ENCODE measurements at regions of chr20 and their contacts with region 1.

Region 1: DNA sequence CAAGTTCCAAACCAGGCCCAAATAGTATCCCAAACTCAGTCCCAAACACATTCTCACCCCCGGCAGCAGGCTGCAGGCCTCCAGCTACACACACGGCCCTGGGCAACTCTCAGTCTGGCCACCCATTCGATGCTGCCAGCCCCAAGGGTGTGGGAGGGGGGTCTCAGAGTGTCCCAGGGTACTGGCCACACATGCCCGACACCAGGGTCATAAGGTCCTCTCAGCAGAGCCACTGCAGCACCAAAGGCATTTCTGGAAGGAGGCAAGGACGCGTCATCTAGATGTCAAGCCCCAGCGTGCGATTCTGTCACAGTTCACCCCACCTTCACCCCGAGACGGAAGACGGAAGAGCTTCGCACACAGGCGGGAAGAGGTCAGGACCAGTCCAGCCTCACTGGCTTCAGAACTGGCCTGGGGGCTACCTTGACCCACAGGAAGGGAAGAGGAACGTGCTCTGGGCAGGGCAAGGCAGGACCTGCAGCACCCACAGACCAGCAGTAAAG is 9.5 kb downstream of the MYL9 start:
- DNase-seq: no peak
- ATAC-seq: no peak
- H3K4me3 Mint-ChIP-seq: no peak overlapping the region
- H3K27ac Mint-ChIP-seq: no peak overlapping the region
- H3K4me1 Mint-ChIP-seq: no peaks in the 10 kb centered on the region
- H3K27me3 Mint-ChIP-seq: no peaks in the 10 kb centered on the region

Region 2: GRCh38 chr20:36591854-36592641 is 41.2 kb after region 1 on chr20:
- CTCF ChIA-PET with region 1: no interaction called
- POLR2A ChIA-PET with region 1: interaction called, 3 read pairs
- intact Hi-C with region 1: loop called in 1 of 2 experiments (anchors 2 kb)
- DNase-seq: peak; percentile 76
- ATAC-seq: peak; percentile 50
- H3K4me3 Mint-ChIP-seq: peak overlapping the region; percentile 4
- H3K27ac Mint-ChIP-seq: peak overlapping the region; percentile 69
- H3K4me1 Mint-ChIP-seq: peaks cover 57% of the 10 kb centered on the region
- H3K27me3 Mint-ChIP-seq: no peaks in the 10 kb centered on the region

Region 3: GRCh38 chr20:36605399-36606157 is 54.7 kb after region 1 on chr20 and contains the start of gene RAB5IF:
- CTCF ChIA-PET with region 1: no interaction called
- POLR2A ChIA-PET with region 1: no interaction called
- intact Hi-C with region 1: loop called (anchors 1 kb)
- DNase-seq: peak; percentile 100
- ATAC-seq: peak; percentile 91
- H3K4me3 Mint-ChIP-seq: peak within 1 kb of the TSS; percentile 100
- H3K27ac Mint-ChIP-seq: peak within 1 kb of the TSS; percentile 96
- H3K4me1 Mint-ChIP-seq: peaks cover 17% of the 10 kb centered on the region
- H3K27me3 Mint-ChIP-seq: no peaks in the 10 kb centered on the region
- total RNA-seq, gene RAB5IF: 71.7 to 90.2 TPM

Region 4: GRCh38 chr20:36629719-36630681 is 79.2 kb after region 1 on chr20:
- CTCF ChIA-PET with region 1: no interaction called
- POLR2A ChIA-PET with region 1: no interaction called
- intact Hi-C with region 1: no loop called
- DNase-seq: peak; percentile 73
- ATAC-seq: peak; percentile 93
- H3K4me3 Mint-ChIP-seq: peak overlapping the region; percentile 52
- H3K27ac Mint-ChIP-seq: peak overlapping the region; percentile 98
- H3K4me1 Mint-ChIP-seq: peaks cover 39% of the 10 kb centered on the region
- H3K27me3 Mint-ChIP-seq: no peaks in the 10 kb centered on the region

Region 5: DNA sequence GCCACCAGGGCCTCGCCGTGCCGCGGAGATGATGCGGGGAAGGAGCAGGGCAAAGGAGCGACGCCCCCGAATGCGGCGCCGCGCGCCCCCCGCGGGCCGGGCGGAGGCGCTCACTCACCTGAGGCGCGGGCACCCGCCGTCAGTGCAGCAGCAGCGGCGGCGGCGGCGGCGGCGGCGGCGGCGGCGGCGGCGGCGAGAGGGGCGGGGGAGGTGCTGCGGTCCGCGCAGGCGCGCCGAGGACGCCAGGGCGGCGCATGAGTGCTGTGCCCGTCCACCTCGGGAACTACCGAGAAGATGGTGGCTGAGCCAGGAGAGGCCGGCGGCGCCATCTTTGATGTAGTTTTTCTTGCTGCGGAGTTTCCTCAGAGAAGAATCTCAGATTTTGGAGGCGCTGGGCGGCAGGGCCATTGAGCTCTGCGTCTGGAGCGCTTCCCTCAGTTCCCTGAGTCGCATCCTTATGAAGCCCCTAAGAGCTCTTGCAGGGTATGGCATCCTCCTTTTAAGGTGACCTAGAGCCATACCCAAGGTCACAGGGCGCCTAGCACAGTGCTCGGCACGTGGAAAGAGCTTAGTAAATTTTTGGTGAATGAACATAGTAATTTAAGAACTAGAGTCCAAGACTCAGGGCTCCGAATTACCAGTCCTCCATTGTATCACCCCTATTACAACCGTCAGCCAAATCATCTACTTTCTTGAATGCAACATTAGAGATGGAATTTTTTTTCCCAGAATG is 195.2 kb after region 1 on chr20 and contains the start of gene NDRG3:
- CTCF ChIA-PET with region 1: no interaction called
- POLR2A ChIA-PET with region 1: no interaction called
- intact Hi-C with region 1: loop called in 1 of 2 experiments (anchors 5 kb)
- DNase-seq: peak; percentile 96
- ATAC-seq: peak; percentile 99
- H3K4me3 Mint-ChIP-seq: peak within 1 kb of the TSS; percentile 81
- H3K27ac Mint-ChIP-seq: peak within 1 kb of the TSS; percentile 87
- H3K4me1 Mint-ChIP-seq: peaks cover 20% of the 10 kb centered on the region
- H3K27me3 Mint-ChIP-seq: no peaks in the 10 kb centered on the region
- total RNA-seq, gene NDRG3: 24.8 to 27.5 TPM

Region 6: GRCh38 chr20:36886859-36887751 is 336.3 kb after region 1 on chr20:
- CTCF ChIA-PET with region 1: no interaction called
- POLR2A ChIA-PET with region 1: no interaction called
- intact Hi-C with region 1: loop called in 1 of 2 experiments (anchors 10 kb)
- DNase-seq: peak; percentile 92
- ATAC-seq: peak; percentile 97
- H3K4me3 Mint-ChIP-seq: no peak overlapping the region
- H3K27ac Mint-ChIP-seq: peak overlapping the region; percentile 9
- H3K4me1 Mint-ChIP-seq: peaks cover 14% of the 10 kb centered on the region
- H3K27me3 Mint-ChIP-seq: no peaks in the 10 kb centered on the region